CD14-positive monocyte (primary cell): ENCODE measurements at regions of chrX and their contacts with region 1.

Region 1: GRCh38 chrX:1341531-1342184 is 5.1 kb downstream of the IL3RA start:
- DNase-seq: peak; percentile 84 to 95 (median 85)
- H3K4me3 ChIP-seq: no peak overlapping the region
- H3K4me3 Mint-ChIP-seq: peak overlapping the region; percentile 54 to 72
- H3K27ac ChIP-seq: peak overlapping the region in 1 of 2 donors; percentile 39
- H3K27ac Mint-ChIP-seq: peak overlapping the region in 6 of 7 donors; percentile 86 to 95 (median 88)
- H3K4me1 ChIP-seq: peaks cover 25 to 30% of the 10 kb centered on the region in 2 donors
- H3K4me1 Mint-ChIP-seq: peaks cover 31% of the 10 kb centered on the region
- H3K27me3 ChIP-seq: no peaks in the 10 kb centered on the region
- H3K27me3 Mint-ChIP-seq: peaks cover 0 to 6% (median 0%) of the 10 kb centered on the region in 3 donors
- CTCF ChIP-seq: no peak

Region 2: GRCh38 chrX:1316527-1316926 is 25.1 kb before region 1 on chrX:
- intact Hi-C with region 1: loop called in 1 of 2 experiments (anchors 5 kb)
- DNase-seq: peak; percentile 98 to 99 (median 98)
- H3K4me3 ChIP-seq: peak overlapping the region in 1 of 3 experiments; percentile 51
- H3K4me3 Mint-ChIP-seq: peak overlapping the region; percentile 58 to 79
- H3K27ac ChIP-seq: peak overlapping the region; percentile 81 to 90
- H3K27ac Mint-ChIP-seq: peak overlapping the region; percentile 94 to 99 (median 95)
- H3K4me1 ChIP-seq: peaks cover 48 to 57% of the 10 kb centered on the region in 2 donors
- H3K4me1 Mint-ChIP-seq: peaks cover 55% of the 10 kb centered on the region
- H3K27me3 ChIP-seq: no peaks in the 10 kb centered on the region
- H3K27me3 Mint-ChIP-seq: peaks cover 0 to 4% (median 0%) of the 10 kb centered on the region in 3 donors
- CTCF ChIP-seq: no peak

Region 3: DNA sequence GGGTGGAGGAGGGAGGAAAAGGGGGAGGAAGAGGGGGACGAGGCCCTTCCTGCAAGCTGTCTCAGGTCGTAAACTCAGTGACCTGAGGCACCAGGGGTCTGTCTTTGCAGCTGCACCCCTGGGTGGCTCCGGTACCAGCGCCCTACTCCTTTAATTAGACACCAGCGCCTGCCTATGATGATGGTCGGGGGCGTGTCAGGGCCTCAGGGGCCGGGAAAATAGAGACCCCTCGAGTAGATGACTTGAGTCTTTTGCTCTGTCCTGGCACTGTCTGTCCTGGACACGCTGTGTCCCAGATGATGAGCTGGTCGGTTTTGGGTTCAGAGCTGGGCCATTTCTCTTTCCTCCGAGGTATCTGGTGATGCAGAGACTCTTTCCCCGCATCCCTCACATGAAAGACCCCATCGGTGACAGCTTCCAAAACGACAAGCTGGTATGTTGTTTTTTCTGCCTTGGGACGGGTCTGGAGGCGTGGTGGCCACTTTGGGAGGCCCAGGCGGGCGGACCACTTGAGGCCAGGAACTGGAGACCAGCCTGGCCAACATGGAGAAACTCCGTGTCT is 39.1 kb after region 1 on chrX:
- intact Hi-C with region 1: loop called in 1 of 2 experiments (anchors 5 kb)
- DNase-seq: no peak
- H3K4me3 ChIP-seq: no peak overlapping the region
- H3K4me3 Mint-ChIP-seq: no peak overlapping the region
- H3K27ac ChIP-seq: no peak overlapping the region
- H3K27ac Mint-ChIP-seq: peak overlapping the region in 2 of 7 donors; percentile 50 to 62
- H3K4me1 ChIP-seq: no peaks in the 10 kb centered on the region
- H3K4me1 Mint-ChIP-seq: peaks cover 11% of the 10 kb centered on the region
- H3K27me3 ChIP-seq: no peaks in the 10 kb centered on the region
- H3K27me3 Mint-ChIP-seq: peaks cover 0 to 3% (median 2%) of the 10 kb centered on the region in 3 donors
- CTCF ChIP-seq: no peak